H1 (cell line): ENCODE measurements at regions of chr12 and their contacts with region 1.

Region 1: GRCh38 chr12:48795480-48796455 is 6.9 kb upstream of the ADCY6 start:
- DNase-seq: peak in 1 of 2 experiments; percentile 90
- H3K4me3 ChIP-seq: no peak overlapping the region
- H3K27ac ChIP-seq: no peak overlapping the region
- H3K4me1 ChIP-seq: no peaks in the 10 kb centered on the region
- H3K27me3 ChIP-seq: no peaks in the 10 kb centered on the region
- CTCF ChIP-seq: peak; percentile 70 to 99 (median 95)
- EP300 ChIP-seq: no peak
- POLR2A ChIP-seq: no peak
- RAD21 ChIP-seq: peak; percentile 99 to 100

Region 2: GRCh38 chr12:48379780-48380179 is 416.0 kb before region 1 on chr12:
- CTCF ChIA-PET with region 1: no interaction called
- POLR2A ChIA-PET with region 1: no interaction called
- DNase-seq: no peak
- H3K4me3 ChIP-seq: no peak overlapping the region
- H3K27ac ChIP-seq: no peak overlapping the region
- H3K4me1 ChIP-seq: no peaks in the 10 kb centered on the region
- H3K27me3 ChIP-seq: no peaks in the 10 kb centered on the region
- CTCF ChIP-seq: no peak
- EP300 ChIP-seq: no peak
- POLR2A ChIP-seq: no peak
- RAD21 ChIP-seq: no peak

Region 3: DNA sequence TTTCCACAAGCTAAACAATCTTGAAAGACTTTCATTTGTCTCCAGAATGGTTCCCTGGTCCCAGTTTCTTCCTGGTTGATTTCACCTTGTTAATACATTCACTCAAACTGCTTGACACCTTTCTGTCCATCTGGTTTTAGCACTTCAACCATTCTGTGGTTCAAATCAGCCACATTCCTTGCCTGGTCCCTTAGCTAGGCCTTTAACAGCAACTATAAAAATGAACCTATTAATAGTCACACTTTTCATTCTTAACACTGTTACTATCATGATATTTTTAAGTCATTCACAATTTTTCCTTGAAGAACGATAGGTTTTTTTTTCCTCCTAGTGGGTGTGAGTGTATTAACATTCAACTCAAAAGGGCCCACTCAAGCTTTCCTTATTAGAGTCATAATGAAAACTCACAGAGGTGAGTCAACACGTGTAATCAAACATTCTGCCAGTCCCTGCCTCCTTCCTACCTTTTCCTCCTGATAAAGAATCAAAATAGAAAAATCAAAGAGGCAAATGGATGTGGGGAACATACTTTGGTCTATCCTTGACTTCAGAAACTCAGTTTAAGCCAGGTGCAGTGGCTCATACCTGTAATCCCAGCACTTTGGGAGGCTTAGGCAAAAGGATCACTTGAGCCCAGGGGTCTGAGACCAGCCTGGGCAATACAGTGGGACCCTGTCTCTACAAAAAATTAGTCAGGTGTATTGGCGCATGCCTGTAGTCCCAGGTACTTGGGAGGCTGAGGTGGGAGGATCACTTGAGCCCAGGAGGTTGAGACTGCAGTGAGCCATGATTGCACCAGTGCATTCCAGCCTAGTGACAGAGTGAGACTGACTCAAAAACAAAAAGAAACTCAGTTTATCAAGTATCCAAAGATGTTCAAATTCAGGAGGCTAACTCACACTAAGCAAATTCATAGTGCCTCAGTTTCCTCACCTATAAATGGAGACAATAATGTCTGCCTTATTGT is 44.7 kb before region 1 on chr12:
- CTCF ChIA-PET with region 1: interaction called, 205 read pairs
- POLR2A ChIA-PET with region 1: interaction called, 3 read pairs
- DNase-seq: no peak
- H3K4me3 ChIP-seq: no peak overlapping the region
- H3K27ac ChIP-seq: no peak overlapping the region
- H3K4me1 ChIP-seq: no peaks in the 10 kb centered on the region
- H3K27me3 ChIP-seq: no peaks in the 10 kb centered on the region
- CTCF ChIP-seq: no peak
- EP300 ChIP-seq: no peak
- POLR2A ChIP-seq: no peak
- RAD21 ChIP-seq: no peak

Region 4: GRCh38 chr12:48758221-48758620 is 37.5 kb before region 1 on chr12:
- CTCF ChIA-PET with region 1: interaction called, 205 read pairs
- POLR2A ChIA-PET with region 1: interaction called, 3 read pairs
- DNase-seq: no peak
- H3K4me3 ChIP-seq: no peak overlapping the region
- H3K27ac ChIP-seq: no peak overlapping the region
- H3K4me1 ChIP-seq: no peaks in the 10 kb centered on the region
- H3K27me3 ChIP-seq: no peaks in the 10 kb centered on the region
- CTCF ChIP-seq: no peak
- EP300 ChIP-seq: no peak
- POLR2A ChIP-seq: no peak
- RAD21 ChIP-seq: no peak

Region 5: GRCh38 chr12:48765753-48766162 is 30.0 kb before region 1 on chr12:
- CTCF ChIA-PET with region 1: interaction called, 69 read pairs
- POLR2A ChIA-PET with region 1: interaction called, 4 read pairs
- DNase-seq: no peak
- H3K4me3 ChIP-seq: no peak overlapping the region
- H3K27ac ChIP-seq: no peak overlapping the region
- H3K4me1 ChIP-seq: peaks cover 0 to 14% (median 9%) of the 10 kb centered on the region in 4 experiments; a peak in 6 of 7 replicates
- H3K27me3 ChIP-seq: no peaks in the 10 kb centered on the region
- CTCF ChIP-seq: no peak
- EP300 ChIP-seq: no peak
- POLR2A ChIP-seq: no peak
- RAD21 ChIP-seq: no peak

Region 6: DNA sequence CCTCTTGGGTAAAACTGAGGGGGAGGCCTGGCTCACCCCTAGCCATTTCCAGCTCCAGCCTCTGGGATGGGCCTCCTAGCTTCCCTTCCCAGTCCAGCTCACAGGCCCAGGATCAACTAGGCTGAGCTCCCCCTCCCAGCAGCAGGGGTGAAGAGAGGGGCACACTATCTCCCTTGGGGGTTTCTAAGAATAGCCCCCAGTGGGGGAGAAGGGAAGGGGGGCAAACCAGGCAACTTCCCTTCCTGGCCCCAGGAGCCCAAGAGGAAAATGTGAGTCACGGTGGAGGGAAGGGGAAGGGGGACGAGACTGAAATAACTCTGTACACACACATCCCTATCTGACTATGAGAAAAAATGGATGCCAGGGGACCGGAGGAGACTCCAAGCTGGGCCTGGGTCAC is 15.9 kb before region 1 on chr12:
- CTCF ChIA-PET with region 1: interaction called, 21 read pairs
- POLR2A ChIA-PET with region 1: interaction called, 12 read pairs
- DNase-seq: no peak
- H3K4me3 ChIP-seq: no peak overlapping the region
- H3K27ac ChIP-seq: no peak overlapping the region
- H3K4me1 ChIP-seq: peaks cover 0 to 14% (median 11%) of the 10 kb centered on the region in 4 experiments; a peak in 6 of 7 replicates
- H3K27me3 ChIP-seq: no peaks in the 10 kb centered on the region
- CTCF ChIP-seq: no peak
- EP300 ChIP-seq: no peak
- POLR2A ChIP-seq: no peak
- RAD21 ChIP-seq: no peak

Region 7: GRCh38 chr12:48807981-48808380 is 12.2 kb after region 1 on chr12:
- CTCF ChIA-PET with region 1: interaction called, 46 read pairs
- POLR2A ChIA-PET with region 1: interaction called, 3 read pairs
- DNase-seq: no peak
- H3K4me3 ChIP-seq: no peak overlapping the region
- H3K27ac ChIP-seq: no peak overlapping the region
- H3K4me1 ChIP-seq: peaks cover 0 to 7% (median 5%) of the 10 kb centered on the region in 4 experiments; a peak in 4 of 7 replicates
- H3K27me3 ChIP-seq: peaks cover 0 to 16% (median 12%) of the 10 kb centered on the region in 4 experiments; a peak in 6 of 7 replicates
- CTCF ChIP-seq: no peak
- EP300 ChIP-seq: no peak
- POLR2A ChIP-seq: no peak
- RAD21 ChIP-seq: no peak

Region 8: GRCh38 chr12:48814262-48815125 is 18.7 kb after region 1 on chr12:
- CTCF ChIA-PET with region 1: interaction called, 46 read pairs
- POLR2A ChIA-PET with region 1: interaction called, 3 read pairs
- DNase-seq: peak in 1 of 2 experiments; percentile 94
- H3K4me3 ChIP-seq: peak overlapping the region; percentile 59 to 94 (median 88)
- H3K27ac ChIP-seq: no peak overlapping the region
- H3K4me1 ChIP-seq: peaks cover 0 to 27% (median 19%) of the 10 kb centered on the region in 4 experiments; a peak in 6 of 7 replicates
- H3K27me3 ChIP-seq: peaks cover 17 to 46% (median 36%) of the 10 kb centered on the region in 4 experiments
- CTCF ChIP-seq: peak in 2 of 3 experiments; percentile 95 to 99; a peak in 3 of 4 replicates
- EP300 ChIP-seq: no peak; a peak in 1 of 3 replicates
- POLR2A ChIP-seq: no peak
- RAD21 ChIP-seq: peak in 1 of 2 experiments; percentile 48; a peak in 2 of 4 replicates

Region 9: DNA sequence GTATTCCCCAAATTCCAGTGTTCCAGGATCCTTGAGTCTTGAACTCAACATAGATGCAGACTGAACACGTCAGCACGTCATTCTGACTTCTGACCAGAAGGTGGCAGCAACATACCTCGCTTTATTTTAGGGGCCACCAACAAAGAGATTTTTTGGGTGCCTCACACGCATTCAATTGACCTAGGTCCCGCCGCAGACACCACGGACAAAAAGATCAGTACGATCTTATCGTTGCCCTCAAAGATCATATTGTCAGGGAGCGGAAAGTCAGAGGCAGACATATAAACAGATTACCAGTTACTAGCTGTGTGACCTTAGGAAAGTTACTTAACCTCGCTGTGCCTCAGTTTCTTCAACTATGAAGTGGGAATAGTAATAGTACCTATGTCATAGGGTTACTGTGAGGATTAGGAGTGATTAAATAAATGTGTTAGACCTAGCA is 492.7 kb after region 1 on chr12:
- CTCF ChIA-PET with region 1: no interaction called
- POLR2A ChIA-PET with region 1: no interaction called
- DNase-seq: peak in 1 of 2 experiments; percentile 82
- H3K4me3 ChIP-seq: no peak overlapping the region
- H3K27ac ChIP-seq: no peak overlapping the region
- H3K4me1 ChIP-seq: peaks cover 0 to 9% (median 7%) of the 10 kb centered on the region in 4 experiments; a peak in 5 of 7 replicates
- H3K27me3 ChIP-seq: peaks cover 4 to 17% (median 16%) of the 10 kb centered on the region in 4 experiments
- CTCF ChIP-seq: peak in 2 of 3 experiments; percentile 79 to 87; a peak in 3 of 4 replicates
- EP300 ChIP-seq: no peak
- POLR2A ChIP-seq: no peak
- RAD21 ChIP-seq: peak; percentile 84 to 86